ENCODE measurements at regions of chr6 and their contacts with region 1.

Region 1: GRCh38 chr6:29016559-29017427 is 11.7 kb upstream of the ZNF311 start:
- DNase-seq: peak; percentile 42
- H3K4me3 ChIP-seq: peak overlapping the region; percentile 72
- H3K27ac ChIP-seq: no peak overlapping the region
- H3K27me3 ChIP-seq: peaks cover 9% of the 10 kb centered on the region
- CTCF ChIP-seq: peak; percentile 91

Region 2: DNA sequence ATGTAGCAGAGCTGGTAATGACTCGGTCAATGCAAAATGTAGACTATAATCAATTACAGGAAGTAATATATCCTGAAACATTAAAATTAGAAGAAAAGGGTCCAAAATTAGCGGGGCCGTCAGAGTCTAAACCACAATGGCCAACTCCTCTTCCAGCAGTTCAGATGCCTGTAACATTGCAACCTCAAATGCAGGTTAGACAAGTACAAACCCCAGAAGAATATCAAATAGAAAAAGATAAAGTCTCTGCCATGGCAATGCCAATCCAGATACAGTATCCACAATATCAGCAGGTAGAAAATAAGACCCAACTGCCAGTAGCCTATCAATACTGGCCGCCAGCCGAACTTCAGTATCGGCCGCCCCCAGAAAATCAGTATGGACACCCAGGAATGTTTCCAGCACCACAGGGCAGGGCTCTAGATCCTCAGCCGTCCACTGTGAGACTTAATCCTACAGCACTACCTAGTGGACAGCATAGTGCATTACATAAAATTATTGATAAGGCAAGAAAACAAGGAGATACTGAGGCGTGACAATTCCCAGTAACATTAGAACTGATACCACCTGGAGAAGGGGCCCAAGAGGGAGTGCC is 332.8 kb before region 1 on chr6:
- CTCF ChIA-PET with region 1: interaction called, 11 read pairs
- POLR2A ChIA-PET with region 1: no interaction called
- DNase-seq: no peak
- H3K4me3 ChIP-seq: no peak overlapping the region
- H3K27ac ChIP-seq: no peak overlapping the region
- H3K27me3 ChIP-seq: no peaks in the 10 kb centered on the region
- CTCF ChIP-seq: peak; percentile 57

Region 3: GRCh38 chr6:28838634-28839442 is 178.0 kb before region 1 on chr6:
- CTCF ChIA-PET with region 1: interaction called, 61 read pairs
- POLR2A ChIA-PET with region 1: no interaction called
- DNase-seq: peak; percentile 38
- H3K4me3 ChIP-seq: peak overlapping the region; percentile 81
- H3K27ac ChIP-seq: no peak overlapping the region
- H3K27me3 ChIP-seq: no peaks in the 10 kb centered on the region
- CTCF ChIP-seq: peak; percentile 82